ENCODE measurements at regions of chr6 and their contacts with region 1.

Region 1: GRCh38 chr6:137722749-137723272 is 144.2 kb upstream of the TNFAIP3 start:
- DNase-seq: no peak
- ATAC-seq: peak; percentile 10
- H3K4me3 ChIP-seq: no peak overlapping the region; a peak in 1 of 6 replicates
- H3K27ac ChIP-seq: peak overlapping the region; percentile 98
- H3K4me1 ChIP-seq: peaks cover 71% of the 10 kb centered on the region
- H3K27me3 ChIP-seq: no peaks in the 10 kb centered on the region
- CTCF ChIP-seq: no peak
- EP300 ChIP-seq: no peak
- POLR2A ChIP-seq: no peak
- RAD21 ChIP-seq: no peak

Region 2: DNA sequence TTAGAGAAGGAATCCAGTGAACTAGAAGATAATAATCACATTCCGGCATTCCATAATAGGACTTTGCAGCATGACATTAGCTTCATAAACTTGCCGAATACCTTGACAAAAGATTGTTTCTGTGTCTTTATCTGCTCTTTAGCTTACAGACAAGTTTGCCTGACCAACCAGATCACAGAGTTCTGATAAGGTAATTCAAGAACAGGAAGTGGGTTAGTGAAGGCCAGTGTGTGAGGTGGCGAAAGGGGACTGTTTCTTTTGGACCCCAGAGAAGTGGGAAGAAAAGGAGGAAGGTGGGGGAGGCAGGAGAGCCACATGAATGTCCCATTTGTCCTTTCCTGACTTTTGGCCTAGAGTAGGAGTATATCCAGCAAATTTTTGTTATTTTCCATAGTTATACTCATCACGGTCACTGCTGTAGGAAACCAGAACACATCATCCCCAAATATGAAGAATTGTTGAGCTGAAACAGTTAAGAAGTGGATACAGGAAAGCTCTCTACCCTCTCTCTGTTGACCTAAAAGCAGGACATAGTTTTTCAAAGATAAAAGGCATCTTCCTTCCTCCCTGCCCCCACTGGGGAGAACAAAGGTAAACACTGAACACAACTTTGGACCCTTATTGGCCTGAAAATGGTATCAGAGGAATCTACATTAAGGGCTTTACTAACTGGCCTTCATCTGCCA is 71.8 kb after region 1 on chr6:
- CTCF ChIA-PET with region 1: no interaction called
- POLR2A ChIA-PET with region 1: interaction called, 30 read pairs
- in situ Hi-C with region 1: no loop called
- intact Hi-C with region 1: loop called (anchors 2 kb)
- DNase-seq: peak; percentile 99
- ATAC-seq: peak; percentile 88
- H3K4me3 ChIP-seq: peak overlapping the region; percentile 5 to 47 (median 5); a peak in 2 of 6 replicates
- H3K27ac ChIP-seq: peak overlapping the region; percentile 98
- H3K4me1 ChIP-seq: peaks cover 96% of the 10 kb centered on the region
- H3K27me3 ChIP-seq: no peaks in the 10 kb centered on the region
- CTCF ChIP-seq: peak; percentile 20; the same call in 1 of the 2 replicates
- EP300 ChIP-seq: peak; percentile 86 to 99; a peak in 3 of 4 replicates
- POLR2A ChIP-seq: no peak
- RAD21 ChIP-seq: peak; percentile 77

Region 3: GRCh38 chr6:137811121-137811915 is 88.5 kb after region 1 on chr6:
- CTCF ChIA-PET with region 1: no interaction called
- POLR2A ChIA-PET with region 1: interaction called, 27 read pairs
- in situ Hi-C with region 1: no loop called
- intact Hi-C with region 1: no loop called
- DNase-seq: peak; percentile 90
- ATAC-seq: peak; percentile 91
- H3K4me3 ChIP-seq: no peak overlapping the region; a peak in 1 of 6 replicates
- H3K27ac ChIP-seq: peak overlapping the region; percentile 65
- H3K4me1 ChIP-seq: peaks cover 66% of the 10 kb centered on the region
- H3K27me3 ChIP-seq: no peaks in the 10 kb centered on the region
- CTCF ChIP-seq: peak; percentile 10; the same call in 1 of the 2 replicates
- EP300 ChIP-seq: peak in 1 of 2 experiments; percentile 58; a peak in 1 of 4 replicates
- POLR2A ChIP-seq: peak; percentile 37 to 46; a peak in 1 of 4 replicates
- RAD21 ChIP-seq: 0 out of 2 replicates have a peak, but pooled peaks have one; percentile 32

Region 4: DNA sequence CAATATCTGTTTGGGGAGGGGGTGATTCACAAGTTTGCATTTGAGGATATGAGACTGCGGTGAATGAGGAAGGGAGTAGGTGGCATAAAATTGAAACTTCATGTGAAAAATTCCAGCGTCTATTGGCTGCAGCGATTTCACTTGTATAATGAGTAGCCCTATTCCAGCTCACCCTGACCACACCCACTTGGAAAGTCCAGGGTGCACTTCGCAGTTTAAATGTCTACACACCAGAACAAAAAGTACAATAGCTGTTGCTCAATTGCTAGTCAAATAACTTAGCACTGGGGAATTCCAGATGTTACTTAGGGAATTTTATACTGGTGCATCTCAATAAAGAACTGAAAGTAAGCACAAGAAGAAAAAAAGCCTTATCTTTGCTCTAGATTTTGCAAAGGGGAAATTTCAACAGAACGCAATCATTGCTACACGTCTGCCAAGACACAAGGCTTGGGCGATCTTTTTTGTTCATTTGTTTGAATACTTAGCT is 150.5 kb after region 1 on chr6:
- CTCF ChIA-PET with region 1: no interaction called
- POLR2A ChIA-PET with region 1: interaction called, 33 read pairs
- in situ Hi-C with region 1: no loop called
- intact Hi-C with region 1: no loop called
- DNase-seq: peak; percentile 99
- ATAC-seq: peak; percentile 95
- H3K4me3 ChIP-seq: peak overlapping the region; percentile 9 to 100 (median 22); a peak in 2 of 6 replicates
- H3K27ac ChIP-seq: peak overlapping the region; percentile 50
- H3K4me1 ChIP-seq: peaks cover 69% of the 10 kb centered on the region
- H3K27me3 ChIP-seq: no peaks in the 10 kb centered on the region; a peak in 1 of 5 replicates
- CTCF ChIP-seq: no peak
- EP300 ChIP-seq: peak in 1 of 2 experiments; percentile 87; a peak in 3 of 4 replicates
- POLR2A ChIP-seq: no peak
- RAD21 ChIP-seq: no peak